ENCODE measurements at regions of chr15 and their contacts with region 1.

Region 1: GRCh38 chr15:67072958-67073357 is 7.6 kb downstream of the SMAD3 start:
- DNase-seq: no peak
- H3K4me3 ChIP-seq: no peak overlapping the region
- H3K4me3 Mint-ChIP-seq: peak overlapping the region; percentile 19 to 87 (median 68)
- H3K27ac ChIP-seq: no peak overlapping the region
- H3K27ac Mint-ChIP-seq: peak overlapping the region in 7 of 8 donors; percentile 18 to 94 (median 85)
- H3K4me1 ChIP-seq: peaks cover 87% of the 10 kb centered on the region
- H3K4me1 Mint-ChIP-seq: peaks cover 83 to 98% (median 95%) of the 10 kb centered on the region in 3 donors
- H3K27me3 ChIP-seq: no peaks in the 10 kb centered on the region
- H3K27me3 Mint-ChIP-seq: peaks cover 0 to 1% of the 10 kb centered on the region in 2 donors

Region 2: GRCh38 chr15:66931768-66932633 is 141.0 kb before region 1 on chr15:
- CTCF ChIA-PET with region 1: no interaction called
- POLR2A ChIA-PET with region 1: no interaction called
- DNase-seq: no peak
- H3K4me3 ChIP-seq: no peak overlapping the region
- H3K4me3 Mint-ChIP-seq: no peak overlapping the region
- H3K27ac ChIP-seq: peak overlapping the region; percentile 22
- H3K27ac Mint-ChIP-seq: no peak overlapping the region
- H3K4me1 ChIP-seq: no peaks in the 10 kb centered on the region
- H3K4me1 Mint-ChIP-seq: no peaks in the 10 kb centered on the region
- H3K27me3 ChIP-seq: no peaks in the 10 kb centered on the region
- H3K27me3 Mint-ChIP-seq: peaks cover 17 to 40% of the 10 kb centered on the region in 2 donors

Region 3: DNA sequence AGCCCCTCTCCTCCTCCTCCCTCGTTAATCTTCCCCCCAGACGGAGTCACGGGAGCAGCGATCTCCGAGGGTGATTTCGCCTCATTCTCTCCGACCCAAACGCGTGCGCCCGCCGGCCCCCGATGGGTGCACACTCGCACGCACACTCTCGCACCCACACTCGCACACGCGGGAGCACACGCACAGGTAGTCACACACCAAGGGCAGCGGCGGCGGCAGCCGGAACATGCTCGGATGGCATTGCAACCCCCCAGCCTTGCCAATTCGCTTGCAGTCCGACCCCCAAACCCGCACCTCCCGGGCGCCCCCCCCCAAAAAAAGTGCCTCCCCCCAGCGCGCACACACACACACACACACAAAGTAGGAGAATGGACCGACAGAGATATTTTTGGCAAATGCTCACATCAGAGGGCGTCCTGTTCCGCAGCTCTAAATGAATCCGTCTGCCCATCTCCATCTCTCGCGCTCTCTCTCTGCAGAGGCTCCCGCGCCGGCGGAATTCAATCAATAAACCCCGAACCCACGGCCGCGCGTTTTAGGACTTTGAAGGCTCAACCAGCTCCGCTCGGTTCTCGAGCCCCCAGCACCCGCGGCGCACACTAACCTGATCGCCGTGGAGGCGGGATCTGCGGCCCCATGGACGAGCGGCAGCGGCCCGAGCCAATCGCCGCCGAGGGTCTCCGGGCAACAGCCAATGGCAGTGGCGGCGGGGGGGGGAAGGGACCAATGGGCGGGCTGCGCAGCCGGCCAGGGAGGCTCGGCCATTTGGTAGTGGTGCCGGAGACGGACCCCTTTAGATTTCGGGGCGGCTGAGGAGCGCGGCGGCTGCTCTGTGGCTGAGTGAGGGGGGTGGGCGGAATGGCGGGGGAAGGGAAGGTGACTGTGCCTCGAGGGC is 1747.6 kb after region 1 on chr15 and contains the start of gene ANP32A:
- CTCF ChIA-PET with region 1: no interaction called
- POLR2A ChIA-PET with region 1: interaction called, 10 read pairs
- DNase-seq: peak; percentile 92 to 97 (median 95)
- H3K4me3 ChIP-seq: peak within 1 kb of the TSS; percentile 90
- H3K4me3 Mint-ChIP-seq: peak within 1 kb of the TSS; percentile 96 to 100 (median 99)
- H3K27ac ChIP-seq: peak within 1 kb of the TSS; percentile 74
- H3K27ac Mint-ChIP-seq: peak within 1 kb of the TSS; percentile 87 to 98 (median 95)
- H3K4me1 ChIP-seq: peaks cover 22% of the 10 kb centered on the region
- H3K4me1 Mint-ChIP-seq: peaks cover 27 to 36% (median 36%) of the 10 kb centered on the region in 3 donors
- H3K27me3 ChIP-seq: no peaks in the 10 kb centered on the region
- H3K27me3 Mint-ChIP-seq: peaks cover 0 to 4% of the 10 kb centered on the region in 2 donors
- total RNA-seq, gene ANP32A: 233 to 237 TPM